Panc1 (cell line): ENCODE measurements at regions of chr22 and their contacts with region 1.

Region 1: DNA sequence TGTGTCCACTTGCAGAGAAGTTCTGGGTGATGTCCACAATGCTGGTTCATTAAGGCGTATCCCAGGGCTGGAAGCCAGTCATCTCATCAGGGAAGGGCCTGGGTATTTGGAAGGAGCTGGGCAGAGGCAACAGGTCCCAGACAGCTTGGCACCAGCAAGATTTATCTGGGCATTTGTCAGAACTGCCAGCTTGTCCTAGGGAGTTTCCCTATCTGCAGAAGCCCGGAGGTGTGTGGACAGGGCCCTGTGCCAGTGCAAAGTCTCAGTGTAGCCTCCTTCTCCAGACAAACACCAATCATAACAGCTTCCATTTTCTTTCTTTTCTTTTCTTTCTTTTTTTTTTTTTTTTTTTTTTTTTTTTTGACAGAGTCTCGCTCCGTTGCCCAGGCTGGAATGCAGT is 125.3 kb upstream of the TIMP3 start:
- DNase-seq: no peak
- ATAC-seq: no peak
- H3K4me3 ChIP-seq: no peak overlapping the region
- H3K27ac ChIP-seq: no peak overlapping the region
- H3K4me1 ChIP-seq: no peaks in the 10 kb centered on the region
- H3K27me3 ChIP-seq: no peaks in the 10 kb centered on the region
- CTCF ChIP-seq: no peak

Region 2: DNA sequence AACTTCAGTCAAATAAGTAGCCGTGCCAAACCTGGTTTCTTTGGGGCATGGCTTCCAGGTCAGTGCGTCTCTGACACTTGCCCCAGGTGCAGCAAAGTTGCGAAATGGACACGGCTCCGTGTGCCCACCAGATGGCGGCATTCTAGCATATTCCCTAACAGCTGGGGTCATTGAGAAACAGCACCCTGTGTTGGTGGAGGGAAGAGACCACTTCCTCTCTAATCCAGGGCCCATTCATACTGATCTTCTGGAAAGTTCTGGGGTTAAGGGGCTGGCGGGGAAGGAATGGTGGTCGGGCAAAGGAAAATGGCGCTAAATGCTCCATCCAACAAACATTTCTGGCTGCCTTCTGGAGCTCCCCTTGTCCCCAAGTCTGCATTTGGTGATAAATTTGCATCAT is 15.9 kb before region 1 on chr22:
- CTCF ChIA-PET with region 1: no interaction called
- POLR2A ChIA-PET with region 1: no interaction called
- in situ Hi-C with region 1: no loop called
- intact Hi-C with region 1: no loop called
- DNase-seq: peak; percentile 4
- ATAC-seq: peak; percentile 71; the same call in 1 of the 2 replicates
- H3K4me3 ChIP-seq: no peak overlapping the region
- H3K27ac ChIP-seq: no peak overlapping the region
- H3K4me1 ChIP-seq: no peaks in the 10 kb centered on the region
- H3K27me3 ChIP-seq: no peaks in the 10 kb centered on the region; the same call in 1 of the 2 replicates
- CTCF ChIP-seq: peak; percentile 68

Region 3: GRCh38 chr22:33083212-33083611 is 407.0 kb after region 1 on chr22:
- CTCF ChIA-PET with region 1: interaction called, 13 read pairs
- POLR2A ChIA-PET with region 1: no interaction called
- in situ Hi-C with region 1: no loop called
- intact Hi-C with region 1: no loop called
- DNase-seq: peak; percentile 4
- ATAC-seq: no peak
- H3K4me3 ChIP-seq: no peak overlapping the region
- H3K27ac ChIP-seq: no peak overlapping the region
- H3K4me1 ChIP-seq: no peaks in the 10 kb centered on the region
- H3K27me3 ChIP-seq: no peaks in the 10 kb centered on the region
- CTCF ChIP-seq: peak; percentile 30; the same call in 1 of the 2 replicates